CD8-positive, alpha-beta T cell (primary cell): ENCODE measurements at regions of chr2 and their contacts with region 1.

Region 1: GRCh38 chr2:165874445-165875039 is 79.0 kb downstream of the TTC21B start:
- DNase-seq: peak in 2 of 9 experiments; percentile 61 to 77
- ATAC-seq: peak; percentile 96
- H3K4me3 ChIP-seq: no peak overlapping the region
- H3K4me3 Mint-ChIP-seq: peak overlapping the region; percentile 2
- H3K27ac ChIP-seq: no peak overlapping the region
- H3K27ac Mint-ChIP-seq: peak overlapping the region; percentile 52
- H3K4me1 ChIP-seq: no peaks in the 10 kb centered on the region
- H3K4me1 Mint-ChIP-seq: peaks cover 14% of the 10 kb centered on the region
- H3K27me3 ChIP-seq: no peaks in the 10 kb centered on the region
- H3K27me3 Mint-ChIP-seq: no peaks in the 10 kb centered on the region
- CTCF ChIP-seq: peak; percentile 89

Region 2: DNA sequence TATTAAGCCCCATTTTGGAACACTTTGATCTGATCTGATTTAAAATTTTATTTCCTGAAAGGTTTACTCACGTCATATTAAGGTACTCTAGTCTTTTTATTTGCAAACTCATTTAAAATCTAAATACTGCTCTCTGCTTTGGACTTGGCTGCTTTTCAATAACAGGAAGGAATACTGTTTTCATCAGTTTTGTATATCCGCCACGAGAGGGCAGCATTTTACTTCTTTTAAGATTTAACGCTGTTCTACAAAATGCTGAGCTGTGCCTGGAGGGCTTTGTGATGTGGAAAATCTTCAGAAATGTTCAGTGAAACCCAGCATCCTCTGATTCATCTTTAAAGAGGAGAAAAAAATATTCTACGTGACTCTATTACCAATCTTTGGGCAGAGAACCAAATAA is 881.7 kb before region 1 on chr2:
- CTCF ChIA-PET with region 1: no interaction called
- POLR2A ChIA-PET with region 1: no interaction called
- intact Hi-C with region 1: loop called in 1 of 2 experiments (anchors 2 kb)
- DNase-seq: peak in 7 of 9 experiments; percentile 6 to 70 (median 32)
- ATAC-seq: peak; percentile 49
- H3K4me3 ChIP-seq: no peak overlapping the region
- H3K4me3 Mint-ChIP-seq: no peak overlapping the region
- H3K27ac ChIP-seq: no peak overlapping the region
- H3K27ac Mint-ChIP-seq: no peak overlapping the region
- H3K4me1 ChIP-seq: no peaks in the 10 kb centered on the region
- H3K4me1 Mint-ChIP-seq: peaks cover 14% of the 10 kb centered on the region
- H3K27me3 ChIP-seq: no peaks in the 10 kb centered on the region
- H3K27me3 Mint-ChIP-seq: no peaks in the 10 kb centered on the region
- CTCF ChIP-seq: peak; percentile 57

Region 3: DNA sequence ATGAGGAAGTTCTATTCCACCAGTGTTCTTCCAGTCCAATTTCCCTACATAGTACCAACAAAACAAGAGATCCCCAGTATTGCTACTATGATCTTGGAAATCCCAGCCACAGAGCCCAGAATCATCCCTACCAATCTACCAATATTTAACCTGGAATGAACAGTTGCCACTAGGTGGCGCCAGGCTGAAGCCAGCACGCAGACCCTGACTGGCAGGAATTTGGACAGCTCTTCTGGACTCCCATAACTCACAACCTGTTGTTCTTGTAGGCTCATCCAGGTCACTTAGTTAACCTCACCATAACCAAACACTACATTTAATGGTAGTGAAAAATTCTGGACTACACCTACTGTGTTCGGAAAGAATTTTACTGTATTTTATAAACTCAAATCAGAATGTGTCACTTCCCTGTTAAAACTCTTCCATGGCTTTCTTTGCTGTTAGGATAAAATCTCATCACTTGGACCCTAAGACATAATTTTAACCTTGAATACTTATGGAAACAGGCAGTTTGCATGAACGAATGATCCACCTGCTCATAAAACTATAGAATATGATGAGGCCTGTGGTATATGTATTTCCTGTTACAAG is 859.4 kb before region 1 on chr2:
- CTCF ChIA-PET with region 1: interaction called, 6 read pairs
- POLR2A ChIA-PET with region 1: no interaction called
- intact Hi-C with region 1: loop called (anchors 1 kb)
- DNase-seq: peak in 8 of 9 experiments; percentile 16 to 60 (median 48)
- ATAC-seq: no peak
- H3K4me3 ChIP-seq: no peak overlapping the region
- H3K4me3 Mint-ChIP-seq: no peak overlapping the region
- H3K27ac ChIP-seq: no peak overlapping the region
- H3K27ac Mint-ChIP-seq: no peak overlapping the region
- H3K4me1 ChIP-seq: no peaks in the 10 kb centered on the region
- H3K4me1 Mint-ChIP-seq: no peaks in the 10 kb centered on the region
- H3K27me3 ChIP-seq: peaks cover 0 to 9% of the 10 kb centered on the region in 2 experiments
- H3K27me3 Mint-ChIP-seq: peaks cover 6% of the 10 kb centered on the region
- CTCF ChIP-seq: peak; percentile 79

Region 4: GRCh38 chr2:165219481-165219880 is 655.1 kb before region 1 on chr2:
- CTCF ChIA-PET with region 1: no interaction called
- POLR2A ChIA-PET with region 1: no interaction called
- intact Hi-C with region 1: no loop called
- DNase-seq: no peak
- ATAC-seq: no peak
- H3K4me3 ChIP-seq: no peak overlapping the region
- H3K4me3 Mint-ChIP-seq: no peak overlapping the region
- H3K27ac ChIP-seq: no peak overlapping the region
- H3K27ac Mint-ChIP-seq: no peak overlapping the region
- H3K4me1 ChIP-seq: no peaks in the 10 kb centered on the region
- H3K4me1 Mint-ChIP-seq: no peaks in the 10 kb centered on the region
- H3K27me3 ChIP-seq: no peaks in the 10 kb centered on the region
- H3K27me3 Mint-ChIP-seq: no peaks in the 10 kb centered on the region
- CTCF ChIP-seq: no peak

Region 5: GRCh38 chr2:165239230-165239629 is 635.3 kb before region 1 on chr2 and contains the start of gene SCN2A:
- CTCF ChIA-PET with region 1: no interaction called
- POLR2A ChIA-PET with region 1: no interaction called
- intact Hi-C with region 1: no loop called
- DNase-seq: peak in 2 of 9 experiments; percentile 7 to 35
- ATAC-seq: no peak
- H3K4me3 ChIP-seq: no peak within 1 kb of the TSS
- H3K4me3 Mint-ChIP-seq: no peak within 1 kb of the TSS
- H3K27ac ChIP-seq: no peak within 1 kb of the TSS
- H3K27ac Mint-ChIP-seq: no peak within 1 kb of the TSS
- H3K4me1 ChIP-seq: no peaks in the 10 kb centered on the region
- H3K4me1 Mint-ChIP-seq: no peaks in the 10 kb centered on the region
- H3K27me3 ChIP-seq: no peaks in the 10 kb centered on the region
- H3K27me3 Mint-ChIP-seq: no peaks in the 10 kb centered on the region
- CTCF ChIP-seq: peak; percentile 26
- total RNA-seq, gene SCN2A: not detected

Region 6: GRCh38 chr2:165293440-165294353 is 580.8 kb before region 1 on chr2:
- CTCF ChIA-PET with region 1: no interaction called
- POLR2A ChIA-PET with region 1: no interaction called
- intact Hi-C with region 1: loop called in 1 of 2 experiments (anchors 5 kb)
- DNase-seq: peak in 6 of 9 experiments; percentile 11 to 91 (median 40)
- ATAC-seq: peak; percentile 100
- H3K4me3 ChIP-seq: no peak overlapping the region
- H3K4me3 Mint-ChIP-seq: no peak overlapping the region
- H3K27ac ChIP-seq: no peak overlapping the region
- H3K27ac Mint-ChIP-seq: no peak overlapping the region
- H3K4me1 ChIP-seq: no peaks in the 10 kb centered on the region
- H3K4me1 Mint-ChIP-seq: peaks cover 5% of the 10 kb centered on the region
- H3K27me3 ChIP-seq: no peaks in the 10 kb centered on the region
- H3K27me3 Mint-ChIP-seq: peaks cover 4% of the 10 kb centered on the region
- CTCF ChIP-seq: peak; percentile 73

Region 7: GRCh38 chr2:165401285-165401852 is 473.2 kb before region 1 on chr2:
- CTCF ChIA-PET with region 1: interaction called, 38 read pairs
- POLR2A ChIA-PET with region 1: no interaction called
- intact Hi-C with region 1: loop called (anchors 1 kb)
- DNase-seq: peak in 3 of 9 experiments; percentile 8 to 68 (median 58)
- ATAC-seq: no peak
- H3K4me3 ChIP-seq: no peak overlapping the region
- H3K4me3 Mint-ChIP-seq: no peak overlapping the region
- H3K27ac ChIP-seq: no peak overlapping the region
- H3K27ac Mint-ChIP-seq: no peak overlapping the region
- H3K4me1 ChIP-seq: no peaks in the 10 kb centered on the region
- H3K4me1 Mint-ChIP-seq: no peaks in the 10 kb centered on the region
- H3K27me3 ChIP-seq: no peaks in the 10 kb centered on the region
- H3K27me3 Mint-ChIP-seq: peaks cover 17% of the 10 kb centered on the region
- CTCF ChIP-seq: peak; percentile 68

Region 8: DNA sequence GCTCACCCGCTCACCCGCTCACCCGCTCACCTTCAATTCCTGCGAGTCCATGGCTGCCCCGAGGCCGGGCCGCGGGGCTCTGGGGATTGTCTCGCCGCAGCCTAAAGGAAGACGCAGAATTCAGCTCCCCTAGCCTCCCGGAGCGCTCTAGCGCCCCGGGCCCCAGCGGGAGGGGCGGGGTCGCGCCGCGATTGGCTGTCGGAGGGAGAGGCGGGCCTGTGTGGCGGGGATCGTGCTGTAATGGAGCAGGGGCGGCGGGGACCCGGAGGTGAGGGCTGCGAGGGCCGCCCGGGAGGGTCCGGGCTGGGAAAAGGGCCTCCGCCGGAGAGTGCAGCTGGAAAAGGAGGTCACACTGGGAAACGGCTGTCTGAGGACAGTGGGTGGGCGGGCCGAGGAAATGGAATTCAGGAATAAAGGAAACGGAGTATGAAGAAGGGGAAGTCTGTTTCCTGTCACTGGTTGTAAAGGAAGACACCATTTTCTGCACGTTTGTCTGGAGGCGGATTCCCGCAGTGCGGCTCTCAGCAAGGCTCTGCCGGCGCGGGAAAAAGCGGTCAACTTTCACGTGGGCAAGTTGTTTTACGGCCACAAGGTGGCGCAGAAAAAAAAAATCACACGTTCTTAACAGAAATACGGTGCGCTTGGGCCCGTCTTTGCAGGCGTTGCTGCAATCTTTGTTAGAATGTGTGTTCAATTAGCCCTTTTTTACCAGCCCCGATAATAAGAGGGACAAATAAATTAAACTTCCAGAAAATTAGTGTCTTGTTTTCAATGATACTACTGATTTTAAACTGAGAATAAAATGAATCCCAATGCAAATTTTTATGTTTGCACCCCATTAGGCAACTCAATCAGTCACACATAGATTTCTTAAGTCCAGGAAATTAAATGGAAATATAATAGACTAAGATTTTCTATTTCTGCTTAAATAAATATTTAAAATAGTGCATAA is 79.4 kb after region 1 on chr2 and contains the start of gene TTC21B:
- CTCF ChIA-PET with region 1: interaction called, 6 read pairs
- POLR2A ChIA-PET with region 1: no interaction called
- intact Hi-C with region 1: loop called in 1 of 2 experiments (anchors 5 kb)
- DNase-seq: peak; percentile 86 to 95 (median 93)
- ATAC-seq: peak; percentile 97
- H3K4me3 ChIP-seq: peak within 1 kb of the TSS; percentile 68 to 82
- H3K4me3 Mint-ChIP-seq: peak within 1 kb of the TSS; percentile 35
- H3K27ac ChIP-seq: peak within 1 kb of the TSS; percentile 72 to 77
- H3K27ac Mint-ChIP-seq: peak within 1 kb of the TSS; percentile 39
- H3K4me1 ChIP-seq: peaks cover 25% of the 10 kb centered on the region
- H3K4me1 Mint-ChIP-seq: peaks cover 27% of the 10 kb centered on the region
- H3K27me3 ChIP-seq: no peaks in the 10 kb centered on the region
- H3K27me3 Mint-ChIP-seq: no peaks in the 10 kb centered on the region
- CTCF ChIP-seq: peak; percentile 76
- total RNA-seq, gene TTC21B: 17.9 to 24.2 TPM

Region 9: GRCh38 chr2:166074430-166074829 is 199.9 kb after region 1 on chr2:
- CTCF ChIA-PET with region 1: no interaction called
- POLR2A ChIA-PET with region 1: no interaction called
- intact Hi-C with region 1: no loop called
- DNase-seq: no peak
- ATAC-seq: no peak
- H3K4me3 ChIP-seq: no peak overlapping the region
- H3K4me3 Mint-ChIP-seq: no peak overlapping the region
- H3K27ac ChIP-seq: no peak overlapping the region
- H3K27ac Mint-ChIP-seq: no peak overlapping the region
- H3K4me1 ChIP-seq: no peaks in the 10 kb centered on the region
- H3K4me1 Mint-ChIP-seq: no peaks in the 10 kb centered on the region
- H3K27me3 ChIP-seq: no peaks in the 10 kb centered on the region
- H3K27me3 Mint-ChIP-seq: peaks cover 11% of the 10 kb centered on the region
- CTCF ChIP-seq: no peak